A673 (cell line): ENCODE measurements at regions of chr3 and their contacts with region 1.

Region 1: DNA sequence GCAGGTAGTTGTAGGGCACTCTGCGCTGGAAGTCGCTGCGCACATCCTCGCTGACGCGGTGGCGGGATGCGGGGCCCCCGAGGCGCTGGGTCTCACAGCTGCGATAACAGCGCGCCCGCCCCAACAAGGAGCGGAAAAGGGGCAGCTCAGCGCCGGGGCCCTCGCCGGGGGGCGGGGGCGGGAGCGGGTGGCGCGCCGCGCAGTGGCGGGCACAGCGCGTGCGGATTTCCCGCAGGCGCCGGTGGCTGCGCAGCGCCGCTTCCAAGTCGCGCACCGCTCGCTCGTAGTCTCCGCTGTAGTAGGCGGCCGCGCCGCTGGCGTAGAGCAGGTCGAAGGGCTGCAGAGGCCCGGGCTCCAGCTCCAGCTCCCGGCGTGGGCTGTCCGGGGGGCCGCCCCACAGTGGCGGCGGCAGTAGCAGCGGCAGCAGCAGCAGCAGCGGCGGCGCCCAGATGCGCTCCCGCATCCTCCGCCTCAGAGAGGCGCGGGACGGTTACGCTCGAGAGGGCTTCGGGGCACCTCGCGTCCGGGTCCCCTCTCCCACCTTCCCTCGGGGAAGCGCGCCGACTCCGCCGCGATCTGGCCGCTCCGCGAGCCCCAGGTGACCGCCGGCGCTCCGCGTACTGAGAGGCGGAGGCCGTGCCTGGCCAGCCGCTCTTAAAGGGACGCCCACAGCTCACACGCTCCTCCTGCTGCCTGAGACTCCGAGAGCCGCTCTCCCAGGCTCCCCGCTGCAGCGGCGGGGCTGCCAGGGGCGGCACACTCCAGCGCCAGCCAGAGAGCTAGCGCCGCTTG is at the start of gene P3H2:
- DNase-seq: peak; percentile 96
- H3K4me3 ChIP-seq: peak within 1 kb of the TSS; percentile 85
- H3K27ac ChIP-seq: peak within 1 kb of the TSS; percentile 53
- H3K4me1 ChIP-seq: peaks cover 4% of the 10 kb centered on the region
- H3K27me3 ChIP-seq: no peaks in the 10 kb centered on the region
- CTCF ChIP-seq: peak; percentile 70
- total RNA-seq, gene P3H2: 19.6 and 21.7 TPM in 2 replicates

Region 2: DNA sequence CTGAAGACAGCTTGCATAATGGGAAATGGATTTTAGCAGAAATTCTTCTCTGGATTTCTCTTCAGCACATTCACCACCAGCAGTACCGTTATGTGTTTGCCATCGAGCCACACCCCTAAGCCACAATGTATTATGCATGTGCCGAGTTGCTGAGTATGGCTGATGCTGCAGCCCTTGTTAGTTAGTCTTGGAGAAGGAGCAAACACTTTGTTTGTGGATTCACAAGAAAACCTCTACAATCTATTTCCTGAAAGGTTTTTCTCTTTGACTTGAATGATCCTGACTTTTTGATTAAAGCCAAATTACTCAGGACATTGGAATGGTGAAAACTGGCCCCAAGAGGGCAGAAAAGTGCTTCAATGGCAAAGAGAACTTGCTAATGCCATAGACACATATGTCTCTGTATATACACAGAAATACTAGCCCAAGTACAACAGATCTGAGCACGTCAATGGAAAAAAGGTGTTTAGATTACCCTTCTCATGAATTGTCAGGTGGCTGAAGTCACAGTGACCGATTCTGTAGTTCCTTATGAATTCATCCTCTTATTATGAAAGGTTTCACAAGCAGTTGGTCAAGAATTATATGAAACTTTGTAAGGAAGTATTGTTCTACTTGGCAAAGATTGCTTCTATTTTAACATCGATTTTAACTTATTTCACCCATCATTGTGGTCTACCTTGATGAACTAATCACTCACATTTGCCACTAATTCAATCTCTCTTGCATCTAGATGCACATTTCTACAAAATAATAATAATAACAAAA is 102.8 kb before region 1 on chr3:
- CTCF ChIA-PET with region 1: no interaction called
- POLR2A ChIA-PET with region 1: no interaction called
- intact Hi-C with region 1: loop called (anchors 2 kb)
- DNase-seq: peak; percentile 70
- H3K4me3 ChIP-seq: no peak overlapping the region
- H3K27ac ChIP-seq: no peak overlapping the region
- H3K4me1 ChIP-seq: peaks cover 28% of the 10 kb centered on the region
- H3K27me3 ChIP-seq: no peaks in the 10 kb centered on the region
- CTCF ChIP-seq: peak; percentile 65